Heart left ventricle (tissue), 16 donors: ENCODE measurements at regions of chrX and their contacts with region 1.

Region 1: GRCh38 chrX:118468122-118468521 is 27.5 kb upstream of the DOCK11 start:
- DNase-seq: no peak
- ATAC-seq: no peak
- H3K4me3 ChIP-seq: no peak overlapping the region
- H3K27ac ChIP-seq: no peak overlapping the region
- H3K4me1 ChIP-seq: no peaks in the 10 kb centered on the region
- H3K27me3 ChIP-seq: no peaks in the 10 kb centered on the region
- CTCF ChIP-seq: no peak
- POLR2A ChIP-seq: no peak

Region 2: GRCh38 chrX:118595501-118596042 is 127.5 kb after region 1 on chrX:
- intact Hi-C with region 1: loop called in 3 of 10 experiments (anchors 10 kb)
- DNase-seq: no peak
- ATAC-seq: peak in 1 of 4 donors; percentile 33
- H3K4me3 ChIP-seq: no peak overlapping the region
- H3K27ac ChIP-seq: peak overlapping the region in 2 of 12 donors; percentile 19 to 24
- H3K4me1 ChIP-seq: peaks cover 0 to 3% (median 0%) of the 10 kb centered on the region in 12 donors
- H3K27me3 ChIP-seq: peaks cover 0 to 11% (median 0%) of the 10 kb centered on the region in 9 donors
- CTCF ChIP-seq: no peak
- POLR2A ChIP-seq: no peak

Region 3: GRCh38 chrX:118603981-118604380 is 135.9 kb after region 1 on chrX:
- intact Hi-C with region 1: loop called in 3 of 10 experiments (anchors 10 kb)
- DNase-seq: peak in 3 of 5 donors; percentile 10 to 38 (median 22)
- ATAC-seq: peak; percentile 37 to 77 (median 59)
- H3K4me3 ChIP-seq: peak overlapping the region in 2 of 12 donors; percentile 4 to 24
- H3K27ac ChIP-seq: peak overlapping the region in 1 of 12 donors; percentile 36
- H3K4me1 ChIP-seq: peaks cover 0 to 4% (median 0%) of the 10 kb centered on the region in 12 donors
- H3K27me3 ChIP-seq: peaks cover 0 to 5% (median 0%) of the 10 kb centered on the region in 9 donors
- CTCF ChIP-seq: peak; percentile 62 to 81 (median 73)
- POLR2A ChIP-seq: no peak